AG04449 (cell line): ENCODE measurements at regions of chr11 and their contacts with region 1.

Region 1: DNA sequence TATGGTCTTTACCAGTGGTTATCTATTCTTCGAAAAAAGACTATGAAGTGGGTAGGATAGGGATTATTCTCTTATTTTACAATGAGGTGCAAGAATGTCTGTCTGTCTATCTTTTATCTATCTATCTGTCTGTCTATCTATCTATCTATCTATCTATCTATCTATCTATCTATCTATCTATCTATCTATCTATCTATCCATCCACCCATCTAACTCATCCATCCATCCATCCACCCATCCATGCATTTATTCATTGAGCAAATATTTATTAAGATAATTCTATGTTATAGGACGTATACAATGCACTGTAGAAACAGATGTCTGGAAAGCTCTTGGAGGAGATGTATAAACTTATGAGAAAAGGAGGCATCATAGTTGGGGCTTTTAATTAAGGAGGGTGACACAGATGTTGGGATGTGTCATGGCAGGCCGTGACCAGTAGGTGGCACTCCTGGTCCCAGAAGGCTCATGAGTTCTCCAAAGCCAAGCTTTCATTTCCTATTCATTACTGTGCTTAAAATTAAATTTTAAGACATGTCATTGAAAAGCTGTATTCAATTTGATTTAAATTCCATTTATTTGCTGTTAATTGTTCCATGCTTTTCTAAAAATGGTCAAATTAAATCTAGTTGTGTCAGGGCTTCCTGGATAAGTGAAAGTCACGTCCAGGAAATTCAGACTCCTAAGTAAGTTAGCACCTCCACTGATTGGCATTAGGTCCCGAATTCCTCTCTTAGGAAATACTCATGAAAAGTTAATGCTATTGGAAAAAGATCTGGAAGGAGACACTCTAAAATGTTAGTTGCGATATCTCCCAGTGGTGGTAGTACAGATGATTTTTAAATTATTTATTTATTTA is 19.0 kb upstream of the E2F8 start:
- DNase-seq: no peak
- H3K4me3 ChIP-seq: no peak overlapping the region
- CTCF ChIP-seq: peak; percentile 84

Region 2: GRCh38 chr11:18785411-18785810 is 474.3 kb before region 1 on chr11:
- CTCF ChIA-PET with region 1: no interaction called
- POLR2A ChIA-PET with region 1: no interaction called
- DNase-seq: no peak
- H3K4me3 ChIP-seq: no peak overlapping the region
- CTCF ChIP-seq: no peak

Region 3: GRCh38 chr11:19076744-19077589 is 182.7 kb before region 1 on chr11:
- CTCF ChIA-PET with region 1: interaction called, 12 read pairs
- POLR2A ChIA-PET with region 1: no interaction called
- DNase-seq: no peak
- H3K4me3 ChIP-seq: no peak overlapping the region
- CTCF ChIP-seq: peak; percentile 89

Region 4: DNA sequence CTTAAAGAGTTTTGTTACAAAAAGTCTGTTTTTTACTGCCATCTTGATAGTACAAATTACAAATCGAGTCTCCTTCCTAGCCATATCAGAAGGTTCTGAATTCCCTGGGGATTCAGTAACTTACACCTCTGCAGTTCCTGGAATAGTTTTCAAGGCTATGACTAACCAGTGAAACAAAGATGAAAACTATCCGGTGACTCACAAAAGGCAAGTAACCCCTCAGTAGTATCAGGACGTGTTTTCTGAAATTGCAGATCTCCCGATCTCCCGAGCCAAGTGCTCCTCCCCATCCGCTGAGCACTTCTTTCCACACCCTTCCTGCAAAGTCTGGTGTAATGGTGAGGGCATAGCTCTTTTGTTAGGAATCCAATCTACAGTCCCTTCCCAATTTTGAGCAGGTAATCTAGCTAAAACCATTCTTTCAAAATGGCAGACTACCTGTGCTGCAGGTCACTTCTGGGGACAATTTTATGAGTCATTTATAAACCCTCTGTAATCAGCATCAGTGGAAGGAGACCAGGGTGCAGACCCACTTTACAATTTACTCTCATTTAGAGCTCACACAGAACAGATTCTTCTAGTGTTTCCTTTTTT is 26.7 kb before region 1 on chr11:
- CTCF ChIA-PET with region 1: interaction called, 11 read pairs
- POLR2A ChIA-PET with region 1: no interaction called
- DNase-seq: peak; percentile 31
- H3K4me3 ChIP-seq: no peak overlapping the region
- CTCF ChIP-seq: no peak

Region 5: GRCh38 chr11:19244102-19244501 is 15.6 kb before region 1 on chr11:
- CTCF ChIA-PET with region 1: interaction called, 47 read pairs
- POLR2A ChIA-PET with region 1: no interaction called
- DNase-seq: no peak
- H3K4me3 ChIP-seq: no peak overlapping the region
- CTCF ChIP-seq: no peak

Region 6: DNA sequence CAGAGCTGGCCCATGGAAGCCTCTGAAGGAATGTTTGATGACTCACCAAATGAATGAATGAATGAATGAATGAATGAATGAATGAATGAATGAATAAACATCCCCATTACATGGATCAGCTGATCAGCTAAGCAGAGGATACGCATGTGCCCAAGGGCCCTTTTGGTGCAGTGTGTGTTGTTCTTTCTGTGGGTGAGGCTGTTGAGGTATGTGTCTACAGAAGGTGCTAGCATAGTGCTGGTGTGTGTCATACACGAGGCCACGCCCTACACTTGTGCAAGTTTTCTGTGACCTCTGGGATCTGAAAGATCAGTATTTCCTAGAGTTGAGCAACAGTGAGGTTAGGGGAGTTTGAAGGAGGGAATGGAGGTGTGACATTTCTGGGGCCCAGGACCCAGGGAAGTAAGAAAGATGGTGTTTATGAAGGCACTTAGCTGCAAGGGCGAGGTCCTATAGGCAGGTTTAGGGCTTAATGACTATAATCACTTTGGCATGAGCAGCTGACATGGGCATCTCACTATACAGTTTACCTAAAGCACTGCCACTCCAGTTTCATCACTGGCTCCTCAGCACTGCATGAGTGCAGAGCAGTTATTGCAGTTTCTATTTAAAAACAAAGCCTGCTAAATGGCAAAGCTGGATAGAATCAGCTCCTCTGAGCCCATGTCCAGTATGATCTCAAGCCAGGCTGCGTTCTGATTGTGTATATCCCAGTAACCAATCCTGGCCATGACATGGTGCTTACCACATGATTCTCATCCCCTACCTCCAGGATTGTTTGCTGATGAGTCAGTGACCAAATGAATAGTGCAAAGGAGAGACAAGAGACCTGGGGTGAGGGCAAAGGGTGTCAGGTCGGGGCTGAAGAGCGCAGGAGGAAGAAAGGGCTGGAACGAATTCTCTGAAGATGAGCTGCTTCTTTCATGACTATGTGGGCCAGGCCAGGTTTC is 17.4 kb after region 1 on chr11:
- CTCF ChIA-PET with region 1: interaction called, 31 read pairs
- POLR2A ChIA-PET with region 1: no interaction called
- DNase-seq: no peak
- H3K4me3 ChIP-seq: no peak overlapping the region
- CTCF ChIP-seq: no peak

Region 7: DNA sequence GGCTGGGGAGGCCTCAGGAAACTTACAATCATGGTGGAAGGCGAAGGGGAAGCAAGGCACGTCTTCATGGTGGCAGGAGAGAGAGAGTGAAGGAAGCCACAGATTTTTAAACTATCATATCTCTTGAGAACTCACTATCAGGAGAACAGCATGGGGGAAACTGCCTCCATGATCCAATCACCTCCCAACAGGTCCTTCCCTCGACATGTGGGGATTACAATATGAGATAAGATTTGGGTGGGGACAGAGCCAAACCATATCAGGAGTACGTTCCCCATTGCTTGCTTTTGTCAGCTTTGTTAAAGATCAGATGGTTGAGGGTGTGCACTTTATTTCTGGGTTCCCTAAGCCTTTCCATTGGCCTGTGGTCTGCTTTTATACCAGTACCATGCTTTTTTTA is 34.7 kb after region 1 on chr11:
- CTCF ChIA-PET with region 1: interaction called, 12 read pairs
- POLR2A ChIA-PET with region 1: no interaction called
- DNase-seq: no peak
- H3K4me3 ChIP-seq: no peak overlapping the region
- CTCF ChIP-seq: no peak